ENCODE measurements at regions of chr19 and their contacts with region 1.

Region 1: GRCh38 chr19:10686661-10687517 is 14.3 kb upstream of the QTRT1 start:
- DNase-seq: no peak
- ATAC-seq: no peak
- H3K4me3 Mint-ChIP-seq: no peak overlapping the region
- H3K27ac Mint-ChIP-seq: no peak overlapping the region
- H3K4me1 Mint-ChIP-seq: no peaks in the 10 kb centered on the region
- H3K27me3 Mint-ChIP-seq: no peaks in the 10 kb centered on the region
- CTCF ChIP-seq: no peak

Region 2: GRCh38 chr19:10670182-10670581 is 16.7 kb before region 1 on chr19:
- CTCF ChIA-PET with region 1: no interaction called
- POLR2A ChIA-PET with region 1: interaction called, 13 read pairs
- intact Hi-C with region 1: no loop called
- DNase-seq: no peak
- ATAC-seq: no peak
- H3K4me3 Mint-ChIP-seq: no peak overlapping the region
- H3K27ac Mint-ChIP-seq: no peak overlapping the region
- H3K4me1 Mint-ChIP-seq: peaks cover 33% of the 10 kb centered on the region
- H3K27me3 Mint-ChIP-seq: no peaks in the 10 kb centered on the region
- CTCF ChIP-seq: no peak

Region 3: GRCh38 chr19:10760273-10760944 is 73.5 kb after region 1 on chr19:
- CTCF ChIA-PET with region 1: no interaction called
- POLR2A ChIA-PET with region 1: no interaction called
- intact Hi-C with region 1: no loop called
- DNase-seq: peak; percentile 61
- ATAC-seq: peak; percentile 32
- H3K4me3 Mint-ChIP-seq: peak overlapping the region; percentile 64
- H3K27ac Mint-ChIP-seq: peak overlapping the region; percentile 91
- H3K4me1 Mint-ChIP-seq: peaks cover 81% of the 10 kb centered on the region
- H3K27me3 Mint-ChIP-seq: no peaks in the 10 kb centered on the region
- CTCF ChIP-seq: no peak